HepG2 (cell line): ENCODE measurements at regions of chr20 and their contacts with region 1.

Region 1: DNA sequence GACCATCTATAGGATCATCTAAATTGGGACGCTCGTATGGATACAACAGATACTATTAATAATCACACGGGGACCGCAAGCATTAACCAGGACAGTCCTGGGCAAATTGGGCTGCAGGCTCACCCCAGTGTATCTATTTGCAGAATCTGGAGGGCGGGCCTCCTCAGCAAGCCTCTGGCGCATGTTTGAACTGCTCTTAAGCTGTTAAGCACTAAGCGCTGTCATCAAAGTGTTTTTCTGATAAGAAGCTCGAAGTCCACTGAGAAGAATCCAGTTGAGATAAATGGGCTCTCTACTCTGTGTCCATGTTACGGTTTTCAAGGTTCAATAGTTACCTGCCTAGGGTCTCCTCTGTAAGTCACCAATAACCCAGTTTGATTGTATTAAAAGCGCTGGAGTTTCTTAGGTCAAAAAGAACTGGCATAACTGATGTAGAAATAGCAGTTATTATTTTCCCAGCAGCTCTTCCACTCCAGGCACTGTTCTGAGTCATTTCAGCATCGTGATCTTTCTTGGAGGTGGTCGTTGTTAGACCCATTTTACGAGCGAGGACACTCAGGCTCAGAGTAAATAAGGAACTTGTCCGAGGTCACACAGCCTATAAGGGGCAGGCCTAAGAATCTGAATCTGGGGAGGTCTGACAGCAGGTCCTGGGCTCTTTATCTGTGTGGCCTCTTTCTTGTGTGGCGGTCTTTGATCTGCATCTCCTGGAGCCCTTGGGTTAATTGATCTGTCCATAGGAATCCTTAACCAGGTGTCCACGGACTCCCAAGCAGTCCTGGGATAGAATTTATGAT is 207.4 kb upstream of the ZNF217 start:
- DNase-seq: peak; percentile 100
- ATAC-seq: peak; percentile 95
- H3K4me3 ChIP-seq: peak overlapping the region; percentile 28 to 48 (median 44); a peak in 4 of 6 replicates
- H3K27ac ChIP-seq: peak overlapping the region; percentile 86
- H3K4me1 ChIP-seq: peaks cover 92% of the 10 kb centered on the region
- H3K27me3 ChIP-seq: no peaks in the 10 kb centered on the region
- CTCF ChIP-seq: 0 out of 2 replicates have a peak, but pooled peaks have one; percentile 20
- EP300 ChIP-seq: peak; percentile 95 to 99; a peak in 3 of 4 replicates
- POLR2A ChIP-seq: 0 out of 4 replicates have a peak, but pooled peaks have one; percentile 23 to 36
- RAD21 ChIP-seq: peak; percentile 56

Region 2: GRCh38 chr20:53643031-53643832 is 157.8 kb before region 1 on chr20:
- CTCF ChIA-PET with region 1: no interaction called
- POLR2A ChIA-PET with region 1: interaction called, 10 read pairs
- in situ Hi-C with region 1: no loop called
- intact Hi-C with region 1: loop called (anchors 2 kb)
- DNase-seq: no peak
- ATAC-seq: peak; percentile 77
- H3K4me3 ChIP-seq: peak overlapping the region; percentile 34 to 64 (median 48); a peak in 5 of 6 replicates
- H3K27ac ChIP-seq: peak overlapping the region; percentile 93
- H3K4me1 ChIP-seq: peaks cover 81% of the 10 kb centered on the region
- H3K27me3 ChIP-seq: no peaks in the 10 kb centered on the region
- CTCF ChIP-seq: no peak
- EP300 ChIP-seq: no peak; a peak in 1 of 4 replicates
- POLR2A ChIP-seq: peak in 1 of 2 experiments; percentile 77; a peak in 2 of 4 replicates
- RAD21 ChIP-seq: no peak

Region 3: GRCh38 chr20:53773792-53774401 is 27.1 kb before region 1 on chr20:
- CTCF ChIA-PET with region 1: no interaction called
- POLR2A ChIA-PET with region 1: interaction called, 17 read pairs
- in situ Hi-C with region 1: no loop called
- intact Hi-C with region 1: loop called (anchors 2 kb)
- DNase-seq: peak; percentile 66
- ATAC-seq: peak; percentile 51
- H3K4me3 ChIP-seq: no peak overlapping the region
- H3K27ac ChIP-seq: peak overlapping the region; percentile 56
- H3K4me1 ChIP-seq: peaks cover 76% of the 10 kb centered on the region
- H3K27me3 ChIP-seq: no peaks in the 10 kb centered on the region
- CTCF ChIP-seq: no peak
- EP300 ChIP-seq: no peak
- POLR2A ChIP-seq: no peak
- RAD21 ChIP-seq: no peak

Region 4: GRCh38 chr20:53829724-53830521 is 28.9 kb after region 1 on chr20:
- CTCF ChIA-PET with region 1: no interaction called
- POLR2A ChIA-PET with region 1: interaction called, 26 read pairs
- in situ Hi-C with region 1: no loop called
- intact Hi-C with region 1: loop called (anchors 1 kb)
- DNase-seq: peak; percentile 94
- ATAC-seq: peak; percentile 96
- H3K4me3 ChIP-seq: peak overlapping the region in 2 of 3 experiments; percentile 25 to 33; a peak in 4 of 6 replicates
- H3K27ac ChIP-seq: peak overlapping the region; percentile 70
- H3K4me1 ChIP-seq: peaks cover 64% of the 10 kb centered on the region
- H3K27me3 ChIP-seq: no peaks in the 10 kb centered on the region
- CTCF ChIP-seq: no peak
- EP300 ChIP-seq: peak in 1 of 2 experiments; percentile 74; a peak in 2 of 4 replicates
- POLR2A ChIP-seq: no peak
- RAD21 ChIP-seq: no peak